ENCODE measurements at regions of chr6 and their contacts with region 1.

Region 1: GRCh38 chr6:88997327-88997726 is 33.9 kb upstream of the RNGTT start:
- DNase-seq: no peak
- H3K4me3 ChIP-seq: no peak overlapping the region
- H3K4me3 Mint-ChIP-seq: no peak overlapping the region
- H3K27ac Mint-ChIP-seq: no peak overlapping the region
- H3K4me1 ChIP-seq: no peaks in the 10 kb centered on the region
- H3K4me1 Mint-ChIP-seq: no peaks in the 10 kb centered on the region
- H3K27me3 ChIP-seq: no peaks in the 10 kb centered on the region
- H3K27me3 Mint-ChIP-seq: no peaks in the 10 kb centered on the region
- CTCF ChIP-seq: no peak

Region 2: DNA sequence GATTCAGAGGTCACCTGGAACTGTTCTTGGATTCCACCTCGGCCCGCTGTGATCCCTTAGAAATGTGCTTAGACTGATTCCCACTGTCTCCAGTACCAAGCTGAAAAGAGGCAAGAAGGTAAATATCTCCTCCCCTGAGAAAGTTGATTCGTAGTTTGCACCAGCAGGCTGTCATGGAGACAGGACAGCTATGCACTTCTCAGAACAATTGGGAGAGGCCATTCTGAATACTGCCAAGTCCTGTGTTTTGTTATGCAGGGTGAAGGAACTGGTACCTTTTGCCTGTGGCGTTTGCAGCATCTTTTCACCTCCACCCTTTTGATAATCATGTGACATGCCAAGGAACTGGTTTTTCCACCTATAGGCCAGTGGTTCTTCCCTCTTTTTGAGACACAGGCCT is 24.3 kb after region 1 on chr6:
- CTCF ChIA-PET with region 1: no interaction called
- POLR2A ChIA-PET with region 1: no interaction called
- intact Hi-C with region 1: loop called (anchors 2 kb)
- DNase-seq: peak in 1 of 2 experiments; percentile 21
- H3K4me3 ChIP-seq: no peak overlapping the region
- H3K4me3 Mint-ChIP-seq: no peak overlapping the region
- H3K27ac Mint-ChIP-seq: no peak overlapping the region
- H3K4me1 ChIP-seq: peaks cover 9% of the 10 kb centered on the region
- H3K4me1 Mint-ChIP-seq: peaks cover 8% of the 10 kb centered on the region
- H3K27me3 ChIP-seq: no peaks in the 10 kb centered on the region
- H3K27me3 Mint-ChIP-seq: no peaks in the 10 kb centered on the region
- CTCF ChIP-seq: no peak

Measured in Caco-2 (cell line).